Body of pancreas (tissue), 4 donors: ENCODE measurements at regions of chr9 and their contacts with region 1.

Region 1: DNA sequence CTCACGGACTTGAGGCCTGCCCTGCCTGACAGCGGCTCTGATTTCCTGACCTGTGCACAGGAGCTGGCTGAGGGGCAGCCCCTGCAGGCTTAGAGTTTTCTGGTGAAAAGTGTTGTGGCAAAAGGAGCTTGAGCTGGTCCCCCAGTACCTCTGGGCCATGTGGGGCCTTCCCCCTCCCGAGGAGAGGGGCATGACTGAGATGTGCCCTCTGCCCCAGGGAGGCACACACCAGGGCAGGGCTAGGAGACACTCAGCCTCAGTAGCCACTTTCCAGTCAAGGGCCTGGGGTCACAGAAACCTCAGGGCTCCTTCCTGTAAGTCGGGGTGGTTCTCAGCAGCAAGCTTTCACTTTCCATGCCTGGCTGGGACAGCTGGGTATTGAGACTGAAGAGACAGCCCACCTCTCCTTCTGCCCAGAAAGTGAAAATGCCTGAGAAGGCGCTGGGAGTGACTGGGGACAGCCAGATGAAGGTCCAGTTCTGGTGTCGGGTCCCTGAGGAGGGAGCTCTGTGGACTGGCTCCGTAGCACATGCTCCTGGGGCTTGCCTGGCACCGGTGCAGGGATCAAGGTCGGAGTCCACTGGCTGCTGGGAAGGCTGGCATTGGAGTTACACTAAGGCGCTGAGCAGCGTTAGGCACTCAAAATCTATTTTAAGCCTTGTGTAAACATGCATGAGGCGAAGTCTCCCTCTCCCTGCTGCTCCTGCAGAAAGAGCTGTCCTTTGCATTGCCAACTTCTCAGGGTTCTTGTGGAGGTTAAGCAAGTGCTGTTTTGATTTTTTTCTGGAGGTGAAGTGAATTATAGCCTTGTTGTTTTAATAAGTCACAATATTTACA is 394.9 kb downstream of the GADD45G start:
- DNase-seq: peak; percentile 89 to 95 (median 94)
- ATAC-seq: peak; percentile 90
- H3K4me3 ChIP-seq: no peak overlapping the region
- H3K27ac ChIP-seq: peak overlapping the region; percentile 92 to 95 (median 94)
- H3K4me1 ChIP-seq: peaks cover 53% of the 10 kb centered on the region
- H3K27me3 ChIP-seq: no peaks in the 10 kb centered on the region
- CTCF ChIP-seq: no peak
- POLR2A ChIP-seq: peak in 2 of 3 donors; percentile 57 to 60

Region 2: DNA sequence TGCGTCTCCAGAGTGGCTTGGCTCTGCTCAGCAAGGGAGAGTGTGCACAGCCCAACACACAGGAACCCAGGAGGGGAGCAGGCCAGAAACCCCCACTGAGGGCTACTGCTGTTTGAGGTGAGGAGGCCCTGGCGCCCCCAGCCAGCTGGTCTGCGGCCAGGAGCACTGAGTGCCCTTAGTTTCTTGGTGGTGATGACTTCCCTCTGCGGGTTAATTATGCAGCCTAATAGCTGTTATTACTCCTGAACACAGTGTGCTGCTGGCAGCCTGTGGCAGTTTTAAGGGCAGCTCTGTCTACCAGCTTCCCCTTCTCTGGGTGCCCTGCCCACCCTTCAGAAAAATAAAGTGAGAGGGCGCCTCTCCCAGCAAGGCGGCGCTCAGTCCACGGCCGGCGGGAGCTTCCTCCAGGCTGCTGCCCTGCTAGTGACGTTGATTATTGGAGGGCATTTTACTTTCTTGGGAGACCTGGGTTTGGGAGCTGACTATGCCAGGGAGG is 375.8 kb before region 1 on chr9:
- intact Hi-C with region 1: loop called (anchors 10 kb)
- DNase-seq: peak; percentile 62 to 71 (median 64)
- ATAC-seq: peak; percentile 61
- H3K4me3 ChIP-seq: no peak overlapping the region
- H3K27ac ChIP-seq: peak overlapping the region; percentile 64 to 89 (median 82)
- H3K4me1 ChIP-seq: peaks cover 74% of the 10 kb centered on the region
- H3K27me3 ChIP-seq: no peaks in the 10 kb centered on the region
- CTCF ChIP-seq: peak in 5 of 7 experiments; percentile 13 to 38 (median 35)
- POLR2A ChIP-seq: no peak

Region 3: DNA sequence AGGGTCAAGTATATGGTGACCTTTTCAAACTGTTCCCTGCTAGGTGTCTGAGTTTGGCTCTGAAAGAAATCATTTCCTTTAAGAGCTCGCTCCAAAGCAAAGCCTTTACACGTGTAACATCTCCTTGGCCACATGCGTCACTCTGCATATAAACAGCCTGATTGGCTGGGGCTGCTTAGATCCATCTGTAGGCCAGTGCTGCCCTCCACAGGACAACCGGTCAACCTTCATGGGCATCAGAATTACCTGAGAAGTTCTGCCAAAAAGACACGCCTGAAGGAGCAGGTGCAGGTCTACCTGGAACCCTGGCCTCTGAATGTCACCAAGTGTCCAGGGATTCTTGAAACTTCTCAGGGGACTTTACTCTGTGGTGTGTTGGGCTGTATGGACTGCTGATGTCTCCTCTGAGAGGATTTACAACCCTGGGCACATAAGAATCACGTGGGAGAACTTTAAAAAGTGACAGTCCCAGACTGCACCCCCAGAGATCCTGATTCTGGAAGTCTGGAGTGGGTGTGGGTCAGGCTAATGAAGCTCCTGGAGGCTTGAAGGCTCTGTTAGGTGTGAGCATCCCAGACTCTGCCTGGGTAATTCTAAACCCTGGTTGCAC is 102.6 kb after region 1 on chr9:
- intact Hi-C with region 1: loop called (anchors 5 kb)
- DNase-seq: peak; percentile 92 to 97 (median 95)
- ATAC-seq: peak; percentile 95
- H3K4me3 ChIP-seq: no peak overlapping the region
- H3K27ac ChIP-seq: peak overlapping the region in 2 of 4 donors; percentile 3 to 8
- H3K4me1 ChIP-seq: peaks cover 18% of the 10 kb centered on the region
- H3K27me3 ChIP-seq: no peaks in the 10 kb centered on the region
- CTCF ChIP-seq: peak; percentile 65 to 98 (median 94)
- POLR2A ChIP-seq: no peak